AG04450 (cell line): ENCODE measurements at regions of chr3 and their contacts with region 1.

Region 1: GRCh38 chr3:22439626-22440025 is 688.6 kb upstream of the ZNF385D start:
- DNase-seq: no peak
- H3K4me3 ChIP-seq: no peak overlapping the region
- H3K27ac ChIP-seq: no peak overlapping the region
- H3K27me3 ChIP-seq: no peaks in the 10 kb centered on the region
- CTCF ChIP-seq: no peak

Region 2: GRCh38 chr3:22421590-22421989 is 18.0 kb before region 1 on chr3:
- CTCF ChIA-PET with region 1: interaction called, 11 read pairs
- POLR2A ChIA-PET with region 1: no interaction called
- DNase-seq: no peak
- H3K4me3 ChIP-seq: no peak overlapping the region
- H3K27ac ChIP-seq: no peak overlapping the region
- H3K27me3 ChIP-seq: no peaks in the 10 kb centered on the region
- CTCF ChIP-seq: no peak

Region 3: DNA sequence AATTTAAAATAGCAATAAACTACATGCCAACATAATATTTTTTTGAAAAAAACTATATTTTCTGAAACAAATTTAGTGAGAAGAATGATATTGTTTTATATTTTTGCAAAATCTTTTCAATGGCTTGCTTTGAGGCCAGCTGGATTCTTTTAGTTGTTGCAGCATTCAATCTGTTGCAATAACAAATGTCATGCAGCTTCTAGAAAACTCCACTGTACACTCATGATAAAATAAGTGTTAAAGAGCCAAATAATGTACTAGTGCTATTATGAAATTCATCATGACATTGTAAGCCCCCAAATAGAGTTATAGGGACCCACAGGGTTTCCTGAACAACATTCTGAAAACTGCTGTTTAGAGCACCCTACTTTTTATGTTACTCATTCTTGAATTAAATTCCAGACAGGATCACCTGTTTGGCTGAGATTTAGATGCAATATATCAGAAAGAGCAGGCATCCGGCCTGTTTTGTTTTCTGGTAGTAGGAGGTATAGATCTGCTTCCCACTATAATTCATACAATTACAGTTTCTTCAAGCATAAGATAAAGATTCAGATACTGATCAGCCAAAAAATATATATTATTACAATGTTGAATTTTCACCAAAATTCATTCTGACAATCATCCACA is 14.4 kb after region 1 on chr3:
- CTCF ChIA-PET with region 1: no interaction called
- POLR2A ChIA-PET with region 1: no interaction called
- DNase-seq: no peak
- H3K4me3 ChIP-seq: no peak overlapping the region
- H3K27ac ChIP-seq: no peak overlapping the region
- H3K27me3 ChIP-seq: no peaks in the 10 kb centered on the region
- CTCF ChIP-seq: no peak